Vagina (tissue), 2 donors: ENCODE measurements at regions of chr1 and their contacts with region 1.

Region 1: GRCh38 chr1:66331657-66332547 is 202.1 kb upstream of the SGIP1 start:
- DNase-seq: no peak
- H3K4me3 ChIP-seq: peak overlapping the region; percentile 52 to 55
- H3K27ac ChIP-seq: peak overlapping the region; percentile 74
- H3K4me1 ChIP-seq: peaks cover 11% of the 10 kb centered on the region
- H3K27me3 ChIP-seq: no peaks in the 10 kb centered on the region
- CTCF ChIP-seq: peak in 2 of 3 experiments; percentile 19 to 26
- POLR2A ChIP-seq: peak in 1 of 2 donors; percentile 42

Region 2: GRCh38 chr1:66271216-66271903 is 60.5 kb before region 1 on chr1:
- intact Hi-C with region 1: loop called (anchors 2 kb)
- DNase-seq: peak in 1 of 2 donors; percentile 97
- H3K4me3 ChIP-seq: peak overlapping the region in 1 of 2 donors; percentile 24
- H3K27ac ChIP-seq: peak overlapping the region; percentile 93
- H3K4me1 ChIP-seq: peaks cover 34% of the 10 kb centered on the region
- H3K27me3 ChIP-seq: no peaks in the 10 kb centered on the region
- CTCF ChIP-seq: no peak
- POLR2A ChIP-seq: peak in 1 of 2 donors; percentile 44

Region 3: DNA sequence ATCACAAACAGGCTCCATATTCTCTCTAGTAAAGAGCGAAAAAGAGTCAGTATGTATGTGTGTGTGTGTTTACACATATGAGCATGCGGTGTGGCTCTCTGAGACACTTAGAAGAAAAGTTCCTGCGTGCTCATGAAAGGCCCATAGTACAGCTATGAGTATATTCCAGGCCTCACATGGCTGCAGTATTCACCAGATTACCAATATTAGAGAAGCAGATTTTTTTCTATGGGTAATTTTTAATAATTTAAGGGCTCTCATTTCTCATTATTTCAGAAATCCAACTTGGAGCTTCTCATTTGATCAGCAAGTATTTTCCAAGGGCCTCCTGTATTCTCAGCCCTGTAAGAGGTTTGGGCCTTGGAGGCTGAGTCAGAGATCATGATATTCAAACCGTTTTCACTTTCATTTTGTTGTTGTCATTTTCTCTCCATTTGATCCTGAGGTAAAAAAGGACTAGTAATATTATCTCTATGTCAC is 30.9 kb before region 1 on chr1:
- intact Hi-C with region 1: no loop called
- DNase-seq: no peak
- H3K4me3 ChIP-seq: no peak overlapping the region
- H3K27ac ChIP-seq: peak overlapping the region; percentile 56
- H3K4me1 ChIP-seq: peaks cover 20% of the 10 kb centered on the region
- H3K27me3 ChIP-seq: no peaks in the 10 kb centered on the region
- CTCF ChIP-seq: no peak
- POLR2A ChIP-seq: no peak

Region 4: DNA sequence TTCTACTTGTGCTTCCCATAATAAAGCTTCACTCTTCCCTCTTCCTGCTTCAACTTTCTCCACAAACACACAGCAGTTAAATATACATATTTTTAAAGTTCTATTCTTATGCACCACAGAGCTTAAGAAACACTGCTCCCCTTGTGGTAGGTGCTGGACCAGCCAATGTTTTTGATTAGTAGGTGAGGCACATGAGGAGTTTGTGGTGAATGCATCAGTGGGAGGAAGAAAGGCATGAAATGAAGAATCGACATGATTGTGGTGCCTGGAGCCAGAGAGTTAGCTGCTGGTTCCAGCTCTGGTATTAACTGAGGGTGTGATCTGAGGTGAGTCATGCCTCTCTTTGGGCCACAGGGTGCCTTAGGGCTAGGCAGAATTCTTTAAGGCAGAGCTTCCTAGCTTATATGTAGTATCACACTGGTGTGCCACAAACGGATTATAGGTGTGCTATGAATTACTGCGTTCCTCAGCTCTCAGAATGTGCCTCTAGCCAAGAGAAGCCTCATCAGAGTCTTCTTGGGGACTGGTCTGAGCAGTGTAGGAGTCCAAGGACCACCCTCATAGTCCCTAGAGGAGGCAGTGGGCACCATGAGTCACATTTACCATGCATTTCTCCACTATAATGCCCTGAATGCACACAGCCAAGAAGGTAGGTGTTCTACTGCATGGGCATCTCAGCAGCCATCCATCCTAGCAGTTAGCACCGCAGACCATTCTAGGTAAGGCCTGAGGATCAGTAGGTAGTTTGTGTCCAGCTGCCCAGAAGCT is 104.7 kb after region 1 on chr1:
- intact Hi-C with region 1: loop called (anchors 10 kb)
- DNase-seq: no peak
- H3K4me3 ChIP-seq: no peak overlapping the region
- H3K27ac ChIP-seq: no peak overlapping the region
- H3K4me1 ChIP-seq: peaks cover 12% of the 10 kb centered on the region
- H3K27me3 ChIP-seq: no peaks in the 10 kb centered on the region
- CTCF ChIP-seq: no peak
- POLR2A ChIP-seq: no peak

Region 5: DNA sequence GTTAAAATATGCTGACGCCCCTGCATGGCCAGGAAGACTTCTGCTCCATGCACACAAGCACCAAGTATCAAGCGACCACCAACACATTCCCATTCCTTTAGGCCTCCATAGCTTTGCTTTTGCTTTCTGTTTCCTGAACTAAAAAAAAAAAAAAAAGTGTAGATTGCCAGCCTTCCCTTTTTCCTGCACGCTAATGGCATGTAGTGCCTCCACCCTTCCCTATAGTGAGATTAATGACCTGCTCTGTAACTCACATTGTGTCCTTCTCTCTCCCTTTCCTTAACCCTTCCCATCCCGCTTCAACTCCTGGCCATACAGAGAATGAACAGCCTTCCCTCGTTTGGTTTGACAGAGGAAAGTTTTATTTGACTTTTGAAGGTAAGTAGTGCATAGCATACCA is 363.2 kb after region 1 on chr1:
- intact Hi-C with region 1: no loop called
- DNase-seq: no peak
- H3K4me3 ChIP-seq: no peak overlapping the region
- H3K27ac ChIP-seq: no peak overlapping the region
- H3K4me1 ChIP-seq: no peaks in the 10 kb centered on the region
- H3K27me3 ChIP-seq: no peaks in the 10 kb centered on the region
- CTCF ChIP-seq: no peak
- POLR2A ChIP-seq: no peak